BJ (cell line): ENCODE measurements at regions of chr1 and their contacts with region 1.

Region 1: DNA sequence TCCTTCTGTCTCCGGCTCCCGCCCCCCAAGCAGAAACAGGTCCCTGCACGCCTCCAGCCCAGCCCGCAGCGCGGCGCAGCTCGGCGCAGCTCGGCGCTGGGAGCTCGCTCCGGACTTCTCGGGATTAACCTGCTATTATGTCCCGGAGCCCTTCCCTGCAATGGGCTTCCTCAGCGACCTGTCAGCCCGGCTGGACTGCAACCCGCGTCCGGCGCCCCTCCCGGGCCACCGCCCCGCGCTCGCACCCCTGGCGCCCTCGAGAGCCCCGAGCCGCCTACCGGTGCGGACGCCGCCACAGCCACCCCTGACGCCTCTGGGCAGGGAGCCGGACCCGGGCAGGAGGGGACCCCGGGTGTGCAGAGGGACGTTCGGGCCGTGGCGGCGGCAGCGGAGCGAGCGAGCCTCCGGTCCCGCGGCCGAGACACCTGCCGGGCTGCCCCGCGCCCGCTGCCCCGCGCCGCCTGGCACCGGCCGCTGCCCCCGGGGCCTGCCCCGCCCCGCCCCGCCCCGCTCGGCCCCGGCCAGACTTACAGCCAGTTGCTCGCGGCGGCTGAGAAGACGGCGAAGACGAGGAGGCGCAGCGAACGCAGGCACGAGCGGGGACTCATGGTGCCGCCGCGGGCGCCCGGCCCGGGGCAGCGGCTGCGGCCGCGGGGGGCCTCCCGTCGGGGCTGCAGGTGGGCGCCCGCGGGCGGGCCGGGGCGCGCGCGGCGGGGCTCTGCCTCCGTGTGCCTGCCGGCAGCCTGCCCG is 407 bp downstream of the WNT4 start:
- DNase-seq: no peak
- H3K4me3 ChIP-seq: peak overlapping the region; percentile 22
- H3K27me3 ChIP-seq: peaks cover 28% of the 10 kb centered on the region
- CTCF ChIP-seq: no peak

Region 2: DNA sequence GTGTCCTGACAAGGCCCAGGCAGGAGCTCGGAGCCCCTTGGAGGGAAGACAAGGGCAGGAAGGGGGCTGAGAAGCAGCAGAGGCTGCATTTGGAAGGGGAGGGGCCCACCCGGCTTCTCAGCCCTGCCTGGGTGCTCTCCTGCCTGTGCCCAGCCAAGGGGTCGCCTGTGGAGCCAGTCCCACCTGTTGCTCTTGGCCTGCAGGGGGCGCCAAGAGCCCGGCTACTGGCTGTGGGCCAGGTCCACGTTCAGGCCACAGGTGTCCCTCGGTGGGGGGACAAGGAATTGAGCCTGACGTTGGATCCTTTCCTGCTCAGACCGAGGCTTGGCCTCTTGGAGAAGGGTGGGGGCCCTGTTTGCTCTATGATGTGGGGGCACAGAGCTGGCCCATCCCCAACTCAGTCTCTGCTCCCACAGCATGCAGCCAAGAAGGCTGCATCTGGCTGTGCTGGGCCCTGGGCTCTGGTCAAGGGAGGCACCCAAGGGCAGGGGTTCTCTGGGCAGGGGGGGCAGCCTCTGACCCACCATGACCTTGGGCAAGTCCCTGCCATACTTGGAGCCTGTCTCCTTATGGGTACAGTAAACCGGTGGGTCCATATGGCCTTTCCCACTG is 10.5 kb before region 1 on chr1:
- CTCF ChIA-PET with region 1: interaction called, 13 read pairs
- POLR2A ChIA-PET with region 1: no interaction called
- DNase-seq: no peak
- H3K4me3 ChIP-seq: no peak overlapping the region
- H3K27me3 ChIP-seq: no peaks in the 10 kb centered on the region
- CTCF ChIP-seq: peak; percentile 70

Region 3: GRCh38 chr1:22259551-22260282 is 117.2 kb after region 1 on chr1:
- CTCF ChIA-PET with region 1: no interaction called
- POLR2A ChIA-PET with region 1: no interaction called
- DNase-seq: no peak
- H3K4me3 ChIP-seq: no peak overlapping the region
- H3K27me3 ChIP-seq: peaks cover 17% of the 10 kb centered on the region
- CTCF ChIP-seq: no peak